ENCODE measurements at regions of chr19 and their contacts with region 1.

Region 1: GRCh38 chr19:6632002-6632621 is 37.8 kb downstream of the TNFSF14 start:
- DNase-seq: no peak
- ATAC-seq: peak in 1 of 4 donors; percentile 69
- H3K4me3 ChIP-seq: no peak overlapping the region
- H3K27ac ChIP-seq: no peak overlapping the region
- H3K4me1 ChIP-seq: no peaks in the 10 kb centered on the region
- H3K27me3 ChIP-seq: peaks cover 0 to 11% (median 0%) of the 10 kb centered on the region in 3 donors
- CTCF ChIP-seq: peak; percentile 83

Region 2: GRCh38 chr19:6516659-6517291 is 115.3 kb before region 1 on chr19:
- intact Hi-C with region 1: loop called (anchors 1 to 2 kb)
- DNase-seq: peak; percentile 93 to 95
- ATAC-seq: peak; percentile 90 to 95 (median 90)
- H3K4me3 ChIP-seq: peak overlapping the region; percentile 83
- H3K27ac ChIP-seq: peak overlapping the region; percentile 85
- H3K4me1 ChIP-seq: peaks cover 16% of the 10 kb centered on the region
- H3K27me3 ChIP-seq: no peaks in the 10 kb centered on the region
- CTCF ChIP-seq: peak; percentile 90

Region 3: GRCh38 chr19:6540918-6541689 is 91.0 kb before region 1 on chr19:
- intact Hi-C with region 1: no loop called
- DNase-seq: no peak
- ATAC-seq: no peak
- H3K4me3 ChIP-seq: no peak overlapping the region
- H3K27ac ChIP-seq: no peak overlapping the region
- H3K4me1 ChIP-seq: no peaks in the 10 kb centered on the region
- H3K27me3 ChIP-seq: no peaks in the 10 kb centered on the region
- CTCF ChIP-seq: no peak

Measured in psoas muscle (tissue), 8 donors.